Activated naive CD4-positive, alpha-beta T cell treated with anti-CD3 and anti-CD28 coated beads for 36 hours (primary cell): ENCODE measurements at regions of chr11 and their contacts with region 1.

Region 1: DNA sequence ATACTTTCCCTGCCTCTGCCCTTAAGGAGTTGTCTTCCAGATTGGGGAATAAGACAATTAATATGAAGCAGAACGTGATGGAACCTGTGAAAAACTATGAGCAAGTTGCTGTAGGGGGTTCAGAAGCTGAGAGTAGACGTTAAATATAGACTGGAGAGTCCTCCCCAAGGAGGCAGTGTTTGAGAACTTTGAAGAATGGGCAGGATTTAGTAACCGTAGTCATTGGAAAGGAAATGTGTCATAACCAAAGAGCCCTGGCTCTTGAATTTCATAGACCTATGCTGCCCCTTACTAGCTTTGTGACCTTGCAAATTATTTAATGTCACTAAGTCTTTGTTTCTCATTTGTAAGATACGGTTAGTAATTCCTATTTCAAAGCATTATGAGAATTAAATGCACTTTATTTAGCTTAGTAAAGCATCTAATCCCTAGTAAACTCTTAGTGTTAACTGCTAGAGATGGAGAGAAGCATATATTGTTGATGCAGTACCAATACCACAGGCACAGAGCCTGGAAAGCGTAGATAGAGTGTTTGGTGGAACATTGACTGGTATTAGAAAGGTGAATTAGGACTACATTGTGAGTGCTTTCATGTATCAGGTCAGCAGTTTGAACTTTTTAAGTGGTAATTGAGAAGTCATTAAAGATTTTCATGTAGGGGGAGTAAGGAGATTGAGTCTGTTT is 54.1 kb downstream of the MCAM start:
- DNase-seq: peak; percentile 35
- H3K4me3 Mint-ChIP-seq: no peak overlapping the region
- H3K27ac Mint-ChIP-seq: no peak overlapping the region
- H3K4me1 Mint-ChIP-seq: peaks cover 56% of the 10 kb centered on the region
- H3K27me3 Mint-ChIP-seq: no peaks in the 10 kb centered on the region

Region 2: DNA sequence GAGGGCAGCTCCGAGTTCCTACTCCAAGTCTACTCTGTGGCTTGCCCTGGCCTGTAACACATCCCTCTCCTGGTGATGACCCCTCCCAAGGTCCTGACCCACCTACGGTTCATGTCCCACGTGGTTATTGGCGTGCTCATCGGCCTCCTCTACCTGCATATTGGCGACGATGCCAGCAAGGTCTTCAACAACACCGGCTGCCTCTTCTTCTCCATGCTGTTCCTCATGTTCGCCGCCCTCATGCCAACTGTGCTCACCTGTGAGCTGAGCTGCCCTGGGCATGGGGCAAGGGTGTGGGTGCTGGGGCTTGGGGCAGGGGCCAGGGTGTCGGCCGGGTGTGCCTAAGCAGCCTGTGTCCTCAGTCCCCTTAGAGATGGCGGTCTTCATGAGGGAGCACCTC is 104.3 kb before region 1 on chr11:
- CTCF ChIA-PET with region 1: no interaction called
- intact Hi-C with region 1: no loop called
- DNase-seq: no peak
- H3K4me3 Mint-ChIP-seq: no peak overlapping the region
- H3K27ac Mint-ChIP-seq: no peak overlapping the region
- H3K4me1 Mint-ChIP-seq: no peaks in the 10 kb centered on the region
- H3K27me3 Mint-ChIP-seq: peaks cover 2% of the 10 kb centered on the region

Region 3: GRCh38 chr11:119218141-119218878 is 44.5 kb before region 1 on chr11:
- CTCF ChIA-PET with region 1: interaction called, 4 read pairs
- intact Hi-C with region 1: loop called (anchors 1 kb)
- DNase-seq: peak; percentile 37
- H3K4me3 Mint-ChIP-seq: no peak overlapping the region
- H3K27ac Mint-ChIP-seq: peak overlapping the region; percentile 33
- H3K4me1 Mint-ChIP-seq: peaks cover 57% of the 10 kb centered on the region
- H3K27me3 Mint-ChIP-seq: no peaks in the 10 kb centered on the region

Region 4: GRCh38 chr11:119236490-119236889 is 26.3 kb before region 1 on chr11:
- CTCF ChIA-PET with region 1: interaction called, 4 read pairs
- intact Hi-C with region 1: loop called (anchors 1 kb)
- DNase-seq: no peak
- H3K4me3 Mint-ChIP-seq: no peak overlapping the region
- H3K27ac Mint-ChIP-seq: no peak overlapping the region
- H3K4me1 Mint-ChIP-seq: peaks cover 49% of the 10 kb centered on the region
- H3K27me3 Mint-ChIP-seq: no peaks in the 10 kb centered on the region

Region 5: GRCh38 chr11:119249671-119250010 is 13.2 kb before region 1 on chr11:
- CTCF ChIA-PET with region 1: interaction called, 10 read pairs
- intact Hi-C with region 1: loop called (anchors 2 kb)
- DNase-seq: no peak
- H3K4me3 Mint-ChIP-seq: no peak overlapping the region
- H3K27ac Mint-ChIP-seq: no peak overlapping the region
- H3K4me1 Mint-ChIP-seq: peaks cover 51% of the 10 kb centered on the region
- H3K27me3 Mint-ChIP-seq: no peaks in the 10 kb centered on the region

Region 6: GRCh38 chr11:119284344-119285157 is 21.7 kb after region 1 on chr11:
- CTCF ChIA-PET with region 1: interaction called, 29 read pairs
- intact Hi-C with region 1: loop called (anchors 1 kb)
- DNase-seq: peak; percentile 29
- H3K4me3 Mint-ChIP-seq: no peak overlapping the region
- H3K27ac Mint-ChIP-seq: no peak overlapping the region
- H3K4me1 Mint-ChIP-seq: peaks cover 16% of the 10 kb centered on the region
- H3K27me3 Mint-ChIP-seq: no peaks in the 10 kb centered on the region

Region 7: GRCh38 chr11:119306373-119306890 is 43.6 kb after region 1 on chr11:
- CTCF ChIA-PET with region 1: interaction called, 3 read pairs
- intact Hi-C with region 1: loop called (anchors 1 kb)
- DNase-seq: peak; percentile 74
- H3K4me3 Mint-ChIP-seq: peak overlapping the region; percentile 60
- H3K27ac Mint-ChIP-seq: peak overlapping the region; percentile 93
- H3K4me1 Mint-ChIP-seq: peaks cover 32% of the 10 kb centered on the region
- H3K27me3 Mint-ChIP-seq: no peaks in the 10 kb centered on the region